ENCODE measurements at regions of chr22 and their contacts with region 1.

Region 1: GRCh38 chr22:41746567-41747400 is 47.5 kb downstream of the MEI1 start:
- DNase-seq: peak; percentile 26 to 70 (median 40)
- H3K4me3 ChIP-seq: no peak overlapping the region
- H3K4me3 Mint-ChIP-seq: no peak overlapping the region
- H3K27ac ChIP-seq: no peak overlapping the region
- H3K27ac Mint-ChIP-seq: peak overlapping the region in 3 of 8 donors; percentile 26 to 38 (median 38)
- H3K4me1 ChIP-seq: no peaks in the 10 kb centered on the region
- H3K4me1 Mint-ChIP-seq: peaks cover 0 to 4% (median 3%) of the 10 kb centered on the region in 3 donors
- H3K27me3 ChIP-seq: no peaks in the 10 kb centered on the region
- H3K27me3 Mint-ChIP-seq: peaks cover 3 to 28% of the 10 kb centered on the region in 2 donors

Region 2: DNA sequence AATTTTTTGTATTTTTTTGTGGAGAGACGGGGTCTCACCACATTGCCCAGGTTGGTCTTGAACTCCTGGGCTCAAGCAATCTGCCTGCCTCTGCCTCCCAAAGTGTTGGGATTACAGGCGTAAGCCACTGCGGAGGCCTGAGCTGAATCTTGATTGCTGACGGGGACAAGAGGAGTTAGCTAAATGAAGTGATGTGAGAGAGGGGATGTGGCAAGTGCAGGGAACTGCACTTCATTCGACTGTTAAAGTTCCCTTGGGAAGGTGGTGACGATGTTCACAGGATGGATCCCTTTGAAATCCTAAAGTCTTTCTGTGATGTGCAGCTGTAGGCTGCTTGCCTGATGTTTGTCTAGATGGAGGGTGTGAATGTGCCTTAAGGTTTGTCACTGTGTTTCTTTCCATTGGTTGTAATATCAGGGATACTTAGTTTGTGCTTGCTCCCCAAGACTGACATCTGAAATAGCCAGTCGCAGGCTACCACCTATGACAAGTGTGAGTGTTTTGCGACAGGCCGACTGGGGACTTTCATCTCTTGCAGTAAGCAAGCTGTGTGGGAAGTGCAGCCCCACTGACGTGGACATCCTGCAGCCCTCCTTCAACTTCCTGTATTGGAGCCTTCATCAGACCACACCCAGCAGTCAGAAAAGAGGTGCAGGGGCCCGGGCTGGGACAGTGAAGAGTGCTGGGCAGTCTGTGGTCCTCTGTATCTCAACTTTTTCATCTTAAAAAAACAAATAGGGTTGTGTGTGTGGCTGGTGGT is 34.1 kb after region 1 on chr22:
- CTCF ChIA-PET with region 1: interaction called, 19 read pairs
- POLR2A ChIA-PET with region 1: interaction called, 3 read pairs
- DNase-seq: peak; percentile 83 to 96 (median 93)
- H3K4me3 ChIP-seq: peak overlapping the region; percentile 78
- H3K4me3 Mint-ChIP-seq: peak overlapping the region; percentile 76 to 92 (median 90)
- H3K27ac ChIP-seq: peak overlapping the region; percentile 71
- H3K27ac Mint-ChIP-seq: peak overlapping the region; percentile 97 to 100 (median 100)
- H3K4me1 ChIP-seq: peaks cover 44% of the 10 kb centered on the region
- H3K4me1 Mint-ChIP-seq: peaks cover 38 to 54% (median 50%) of the 10 kb centered on the region in 3 donors
- H3K27me3 ChIP-seq: no peaks in the 10 kb centered on the region
- H3K27me3 Mint-ChIP-seq: no peaks in the 10 kb centered on the region

Region 3: GRCh38 chr22:41857155-41857859 is 110.5 kb after region 1 on chr22:
- CTCF ChIA-PET with region 1: interaction called, 19 read pairs
- POLR2A ChIA-PET with region 1: no interaction called
- DNase-seq: peak; percentile 59 to 77 (median 69)
- H3K4me3 ChIP-seq: no peak overlapping the region
- H3K4me3 Mint-ChIP-seq: peak overlapping the region in 6 of 7 donors; percentile 11 to 66 (median 40)
- H3K27ac ChIP-seq: no peak overlapping the region
- H3K27ac Mint-ChIP-seq: peak overlapping the region; percentile 81 to 96 (median 88)
- H3K4me1 ChIP-seq: peaks cover 31% of the 10 kb centered on the region
- H3K4me1 Mint-ChIP-seq: peaks cover 41 to 68% (median 60%) of the 10 kb centered on the region in 3 donors
- H3K27me3 ChIP-seq: no peaks in the 10 kb centered on the region
- H3K27me3 Mint-ChIP-seq: no peaks in the 10 kb centered on the region

Measured in CD8-positive, alpha-beta memory T cell (primary cell).